GM12878 (cell line): ENCODE measurements at regions of chr3 and their contacts with region 1.

Region 1: DNA sequence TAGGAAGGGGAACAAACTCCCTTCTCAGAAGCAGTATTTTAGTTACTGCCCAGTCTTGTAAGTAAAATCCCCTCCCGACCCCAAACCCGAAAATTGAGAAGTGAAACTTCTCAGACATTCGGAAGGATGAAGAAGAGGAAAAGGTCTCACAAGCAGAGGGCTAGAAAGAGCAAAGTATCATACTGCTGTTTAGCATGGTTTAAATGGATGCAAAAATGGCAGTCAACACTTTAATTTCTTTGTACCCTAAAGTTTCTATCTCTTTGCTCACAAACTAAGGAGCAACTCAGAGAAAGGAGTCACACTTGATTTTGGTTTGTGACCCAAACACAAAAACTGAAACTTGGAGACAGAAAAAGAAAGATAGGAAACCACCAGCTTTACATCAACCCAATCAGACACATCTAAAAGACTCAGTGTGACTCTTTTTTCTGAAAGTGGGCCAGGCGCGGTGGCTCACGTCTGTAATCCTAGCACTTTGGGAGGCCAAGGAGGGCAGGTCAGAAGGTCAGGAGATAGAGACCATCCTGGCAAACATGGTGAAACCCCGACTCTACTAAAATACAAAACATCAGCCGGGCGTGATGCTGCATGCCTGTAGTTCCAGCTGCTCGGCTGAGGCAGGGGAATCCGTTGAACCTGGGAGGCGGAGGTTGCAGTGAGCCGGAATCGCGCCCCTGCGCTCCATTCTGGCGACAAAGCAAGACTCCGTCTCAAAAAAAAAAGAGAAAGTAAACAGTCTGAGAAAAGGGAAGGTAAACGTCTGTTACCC is 63.2 kb upstream of the ATP11B start:
- DNase-seq: peak; percentile 68
- ATAC-seq: peak; percentile 86
- H3K4me3 ChIP-seq: peak overlapping the region; percentile 65
- H3K27ac ChIP-seq: peak overlapping the region; percentile 90
- H3K4me1 ChIP-seq: peaks cover 8% of the 10 kb centered on the region
- H3K27me3 ChIP-seq: no peaks in the 10 kb centered on the region
- CTCF ChIP-seq: no peak
- EP300 ChIP-seq: peak; percentile 26 to 51; a peak in 1 of 4 replicates
- POLR2A ChIP-seq: no peak
- RAD21 ChIP-seq: 0 out of 2 replicates have a peak, but pooled peaks have one; percentile 10

Region 2: DNA sequence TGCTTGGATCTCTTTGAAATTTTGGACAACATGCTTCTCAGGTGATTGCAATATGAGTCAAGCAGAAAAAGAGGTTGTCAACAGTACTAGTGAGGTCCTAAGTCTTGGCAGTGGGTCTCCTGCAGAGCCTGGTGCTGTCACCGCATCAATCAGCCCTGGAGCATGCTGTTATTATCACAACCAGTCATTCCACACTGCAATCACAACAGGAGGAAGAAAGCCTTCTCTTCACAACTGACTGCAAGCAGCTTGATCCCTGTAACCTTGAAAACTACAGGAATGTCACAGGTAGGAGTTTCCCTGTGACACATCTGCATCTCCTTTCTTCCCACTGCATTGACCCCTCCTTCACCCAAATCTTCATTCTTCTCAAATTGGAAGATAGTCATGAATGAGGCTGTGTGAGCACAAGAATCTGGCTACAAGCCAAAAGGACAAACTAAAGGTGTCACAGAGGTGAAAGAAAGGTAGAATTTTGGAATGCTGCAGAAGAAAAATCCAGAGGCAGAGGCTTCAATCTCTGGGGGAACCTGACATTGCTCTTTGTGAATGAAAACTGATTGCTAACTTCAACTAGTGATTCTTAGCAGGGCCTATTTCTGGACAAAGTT is 387.7 kb before region 1 on chr3:
- CTCF ChIA-PET with region 1: no interaction called
- POLR2A ChIA-PET with region 1: no interaction called
- RAD21 ChIA-PET with region 1: no interaction called
- SMC1A ChIA-PET with region 1: no interaction called
- in situ Hi-C with region 1: no loop called
- intact Hi-C with region 1: no loop called
- DNase-seq: no peak
- ATAC-seq: no peak
- H3K4me3 ChIP-seq: no peak overlapping the region
- H3K27ac ChIP-seq: no peak overlapping the region
- H3K4me1 ChIP-seq: no peaks in the 10 kb centered on the region
- H3K27me3 ChIP-seq: no peaks in the 10 kb centered on the region
- CTCF ChIP-seq: no peak
- EP300 ChIP-seq: no peak
- POLR2A ChIP-seq: no peak
- RAD21 ChIP-seq: no peak

Region 3: DNA sequence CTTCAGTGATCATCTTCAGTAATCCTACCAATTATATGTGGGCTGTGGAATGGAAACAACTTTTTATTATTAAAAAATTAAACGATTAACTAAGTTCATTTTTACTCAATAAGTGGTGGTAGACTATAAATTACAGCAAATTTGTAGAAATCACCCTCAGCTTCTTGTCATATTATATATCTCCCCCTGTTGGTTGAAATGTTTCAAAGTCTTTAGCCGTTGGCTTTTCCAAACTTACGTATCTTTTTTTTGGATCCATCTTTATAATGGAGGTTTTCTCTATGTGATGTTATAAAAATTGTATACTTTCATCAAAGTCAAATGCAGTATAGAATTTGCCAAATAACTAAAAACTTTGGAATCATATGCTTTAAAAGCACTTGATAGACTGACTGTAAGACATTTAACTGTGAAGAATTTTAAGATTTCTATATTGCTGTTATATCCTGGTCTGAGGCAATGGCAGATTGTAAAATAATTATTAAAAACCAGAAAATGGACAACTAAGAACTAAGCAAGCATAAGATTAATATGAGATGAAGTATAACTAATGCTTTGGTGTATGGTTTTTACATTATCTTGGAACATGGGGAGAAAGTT is 107.9 kb after region 1 on chr3:
- CTCF ChIA-PET with region 1: interaction called, 10 read pairs
- POLR2A ChIA-PET with region 1: no interaction called
- RAD21 ChIA-PET with region 1: interaction called, 7 read pairs
- SMC1A ChIA-PET with region 1: interaction called, 10 read pairs
- in situ Hi-C with region 1: no loop called
- intact Hi-C with region 1: no loop called
- DNase-seq: no peak
- ATAC-seq: no peak
- H3K4me3 ChIP-seq: no peak overlapping the region
- H3K27ac ChIP-seq: no peak overlapping the region
- H3K4me1 ChIP-seq: no peaks in the 10 kb centered on the region; the same call in 1 of the 2 replicates
- H3K27me3 ChIP-seq: no peaks in the 10 kb centered on the region
- CTCF ChIP-seq: peak in 1 of 3 experiments; percentile 29; a peak in 1 of 6 replicates
- EP300 ChIP-seq: no peak
- POLR2A ChIP-seq: no peak
- RAD21 ChIP-seq: peak; percentile 45; the same call in 1 of the 2 replicates